HEK293T (cell line): ENCODE measurements at regions of chr10 and their contacts with region 1.

Region 1: DNA sequence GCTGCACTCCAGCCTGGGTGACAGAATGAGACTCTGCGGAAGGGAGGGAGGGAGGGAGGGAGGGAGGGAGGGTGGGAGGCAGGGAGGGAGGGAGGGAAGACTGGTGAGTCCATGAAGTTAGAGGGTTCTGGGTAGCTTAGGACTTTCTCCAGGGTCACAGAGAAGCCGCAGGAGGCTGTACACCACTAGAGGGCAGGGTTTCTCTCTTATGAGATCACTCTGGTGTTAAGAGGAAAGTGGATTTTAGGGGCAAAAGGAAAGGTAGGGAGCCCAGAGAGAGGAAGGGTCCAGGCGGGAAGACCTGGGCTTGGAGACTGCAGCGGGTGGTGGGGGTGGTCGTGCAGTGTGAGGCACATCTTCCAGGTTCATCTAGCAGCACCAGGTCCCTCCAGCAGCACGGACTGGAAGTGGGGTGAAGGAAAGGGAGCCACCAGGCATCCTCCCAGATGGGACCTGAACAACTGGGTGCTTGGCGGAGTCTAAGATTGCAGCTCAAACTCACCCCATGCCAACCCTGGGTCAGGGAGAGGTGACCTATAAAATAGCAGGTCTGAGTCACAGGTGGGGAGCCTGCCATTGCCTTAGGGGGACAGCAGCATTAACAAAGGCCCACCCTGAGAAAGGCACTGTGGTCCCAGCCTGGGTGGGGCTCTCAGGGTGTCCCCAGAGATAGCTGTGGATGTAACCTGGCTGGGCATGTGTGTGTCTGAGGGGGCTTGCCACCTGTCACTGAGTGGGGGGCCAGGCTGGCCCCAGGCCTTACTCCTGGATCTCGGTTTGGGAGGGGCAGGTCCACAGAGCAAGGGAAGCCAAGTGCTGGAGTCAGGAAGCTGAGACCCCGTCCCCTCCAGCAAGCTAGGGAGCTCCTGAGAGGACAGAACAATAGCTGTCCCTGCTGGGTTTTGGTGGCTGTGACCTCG is 48.5 kb upstream of the SLC29A3 start:
- DNase-seq: peak; percentile 74

Region 2: DNA sequence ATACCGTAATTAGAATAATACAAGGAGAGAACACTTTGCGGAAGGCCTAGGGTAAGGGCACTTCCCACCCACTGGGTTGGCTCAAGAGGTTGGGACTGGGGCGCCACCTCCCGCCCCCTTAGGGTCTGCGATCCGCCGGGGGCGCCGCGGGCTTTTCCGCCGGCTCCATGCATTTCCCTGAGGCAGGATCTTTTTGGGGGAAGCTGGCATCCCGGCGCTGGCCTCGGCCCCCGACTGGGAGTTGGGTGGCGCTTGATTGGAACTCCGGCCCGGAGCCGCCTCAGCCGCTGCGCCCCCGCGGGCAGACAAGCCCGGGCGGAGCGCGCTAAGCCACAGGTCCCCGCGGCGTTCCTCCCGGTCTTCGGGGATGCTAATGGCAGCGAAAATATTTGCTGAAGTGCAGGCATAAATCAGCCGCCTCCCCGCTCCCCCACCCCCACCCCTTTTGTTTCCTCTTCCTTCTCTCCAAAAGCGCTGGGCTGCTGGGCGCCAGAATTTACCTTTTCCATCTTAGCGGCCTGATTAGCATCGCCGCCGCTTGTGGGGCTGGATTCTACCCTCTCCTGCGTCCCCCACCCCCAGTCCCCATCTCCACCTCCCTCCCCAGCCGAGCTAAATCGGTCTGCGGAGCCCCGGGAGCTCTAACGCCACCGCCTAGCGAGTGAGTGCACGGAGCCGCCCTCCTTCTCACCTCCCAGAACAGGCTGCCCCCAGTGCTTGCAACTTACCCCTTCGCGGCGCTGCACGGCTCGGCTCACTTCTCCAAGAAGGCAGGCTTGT is 53.1 kb before region 1 on chr10:
- CTCF ChIA-PET with region 1: interaction called, 10 read pairs
- POLR2A ChIA-PET with region 1: interaction called, 8 read pairs
- DNase-seq: peak; percentile 41

Region 3: GRCh38 chr10:71285180-71285545 is 14.6 kb after region 1 on chr10:
- CTCF ChIA-PET with region 1: interaction called, 11 read pairs
- POLR2A ChIA-PET with region 1: no interaction called
- DNase-seq: peak; percentile 72